Mammary epithelial cell (primary cell): ENCODE measurements at regions of chr11 and their contacts with region 1.

Region 1: DNA sequence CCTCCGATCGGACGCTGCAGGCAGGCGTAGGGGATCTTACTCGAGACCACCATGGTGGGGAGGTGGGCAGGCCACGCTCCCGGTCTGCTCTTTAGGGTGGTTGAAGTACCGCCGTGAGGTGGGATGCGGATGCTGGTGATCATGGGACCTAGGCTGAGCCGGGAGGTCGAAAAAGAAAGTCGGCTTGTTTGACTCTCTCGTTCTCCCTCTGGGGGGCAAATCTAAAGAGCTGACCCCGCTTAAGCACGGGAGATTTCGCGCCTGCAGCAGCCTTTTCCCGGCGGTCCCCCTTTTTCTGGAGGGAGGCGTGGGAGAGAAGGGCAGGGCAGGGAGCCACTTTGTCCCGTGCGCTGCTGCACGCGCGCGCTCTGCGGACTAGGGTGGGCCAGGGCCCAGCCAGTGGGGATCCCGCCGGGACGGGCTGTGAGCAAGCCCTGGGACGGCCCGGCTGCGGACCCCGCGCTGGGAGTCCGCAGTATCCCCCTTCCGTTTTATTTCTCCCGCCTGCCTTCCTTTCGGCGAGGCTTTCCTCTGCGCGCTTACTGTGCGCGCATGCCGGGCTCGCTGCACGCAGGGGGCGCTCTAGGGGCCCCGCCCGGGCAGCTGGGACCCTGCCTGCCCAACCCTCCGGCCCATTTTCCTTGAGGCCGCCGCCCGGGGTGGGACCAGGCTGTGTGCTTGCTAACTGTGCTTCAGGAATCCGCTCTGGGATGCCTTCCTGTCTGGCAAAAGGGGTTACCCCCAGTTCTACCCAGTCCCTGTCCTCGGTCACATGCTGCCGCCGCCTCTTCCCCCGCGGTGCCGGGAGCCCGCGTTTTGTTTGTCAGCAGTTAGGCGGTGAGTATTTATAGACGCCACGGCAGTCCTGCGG is 81.0 kb downstream of the PRR5L start:
- DNase-seq: peak; percentile 54
- H3K4me3 ChIP-seq: peak overlapping the region; percentile 56 to 84 (median 67)
- H3K27ac ChIP-seq: peak overlapping the region; percentile 12
- H3K4me1 ChIP-seq: peaks cover 9% of the 10 kb centered on the region
- H3K27me3 ChIP-seq: no peaks in the 10 kb centered on the region
- CTCF ChIP-seq: peak; percentile 18 to 68

Region 2: GRCh38 chr11:36306888-36307287 is 70.2 kb before region 1 on chr11:
- CTCF ChIA-PET with region 1: no interaction called
- dilution Hi-C with region 1: no loop called
- in situ Hi-C with region 1: no loop called
- intact Hi-C with region 1: loop called (anchors 5 kb)
- DNase-seq: no peak
- H3K4me3 ChIP-seq: no peak overlapping the region
- H3K27ac ChIP-seq: no peak overlapping the region
- H3K4me1 ChIP-seq: peaks cover 18% of the 10 kb centered on the region
- H3K27me3 ChIP-seq: no peaks in the 10 kb centered on the region
- CTCF ChIP-seq: peak; percentile 28 to 42

Region 3: DNA sequence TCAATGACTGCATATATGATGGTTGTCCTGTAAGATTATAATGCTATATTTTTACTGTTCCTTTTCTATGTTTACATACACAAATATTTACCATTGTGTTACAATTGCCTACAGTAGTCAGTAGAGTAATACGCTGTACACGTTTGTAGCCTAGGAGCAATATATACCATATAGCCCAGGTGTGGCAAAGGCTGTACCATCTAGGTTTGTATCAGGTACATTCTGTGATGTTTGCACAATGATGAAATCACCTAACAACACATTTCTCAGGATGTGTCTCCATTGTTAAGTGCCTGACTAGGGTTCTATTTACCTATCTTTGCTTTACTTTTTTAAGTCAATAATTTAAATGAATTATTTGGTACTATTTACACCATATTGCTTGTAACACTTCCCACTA is 59.1 kb before region 1 on chr11:
- CTCF ChIA-PET with region 1: no interaction called
- dilution Hi-C with region 1: no loop called
- in situ Hi-C with region 1: no loop called
- intact Hi-C with region 1: no loop called
- DNase-seq: no peak
- H3K4me3 ChIP-seq: no peak overlapping the region
- H3K27ac ChIP-seq: no peak overlapping the region
- H3K4me1 ChIP-seq: peaks cover 1% of the 10 kb centered on the region
- H3K27me3 ChIP-seq: peaks cover 2% of the 10 kb centered on the region
- CTCF ChIP-seq: no peak

Region 4: GRCh38 chr11:36333897-36334296 is 43.2 kb before region 1 on chr11:
- CTCF ChIA-PET with region 1: no interaction called
- dilution Hi-C with region 1: no loop called
- in situ Hi-C with region 1: no loop called
- intact Hi-C with region 1: loop called (anchors 5 kb)
- DNase-seq: peak; percentile 33
- H3K4me3 ChIP-seq: no peak overlapping the region
- H3K27ac ChIP-seq: no peak overlapping the region
- H3K4me1 ChIP-seq: peaks cover 8% of the 10 kb centered on the region
- H3K27me3 ChIP-seq: no peaks in the 10 kb centered on the region
- CTCF ChIP-seq: no peak

Region 5: GRCh38 chr11:36421546-36422155 is 44.5 kb after region 1 on chr11:
- CTCF ChIA-PET with region 1: no interaction called
- dilution Hi-C with region 1: loop called (anchors 5 kb)
- in situ Hi-C with region 1: no loop called
- intact Hi-C with region 1: no loop called
- DNase-seq: no peak
- H3K4me3 ChIP-seq: no peak overlapping the region
- H3K27ac ChIP-seq: no peak overlapping the region
- H3K4me1 ChIP-seq: peaks cover 17% of the 10 kb centered on the region
- H3K27me3 ChIP-seq: no peaks in the 10 kb centered on the region
- CTCF ChIP-seq: no peak

Region 6: DNA sequence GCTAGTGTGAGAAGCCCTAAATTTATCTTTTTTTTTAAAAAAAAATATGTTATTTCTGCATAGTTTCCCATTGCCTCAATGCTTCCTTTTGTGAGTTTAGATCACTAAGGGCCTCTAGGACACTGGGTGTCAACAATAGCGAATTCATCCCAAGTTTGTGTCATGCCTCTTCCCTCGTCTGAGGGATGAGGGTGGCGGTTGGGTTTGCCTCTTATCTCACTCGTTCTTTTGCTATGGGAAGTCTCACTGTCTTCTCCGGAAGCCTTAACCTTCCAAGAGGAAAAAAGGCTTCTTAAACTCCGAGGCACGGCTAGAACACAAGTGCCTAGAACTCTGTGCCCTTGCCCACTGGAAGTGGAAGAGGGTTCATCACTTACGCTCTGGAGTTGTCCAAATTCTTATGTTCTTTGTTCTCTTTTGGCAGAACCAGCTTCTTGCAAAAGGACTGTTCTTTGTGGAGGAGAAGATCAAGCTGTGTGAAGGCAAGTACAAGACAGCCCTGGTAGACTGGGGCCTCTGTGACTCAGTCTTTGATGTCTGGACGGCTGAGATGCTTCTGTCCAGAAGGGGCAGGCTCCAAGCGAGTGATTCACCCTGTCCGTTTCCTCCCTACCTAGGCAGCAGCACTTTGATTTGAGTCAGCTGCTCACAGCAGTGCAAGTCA is 54.4 kb after region 1 on chr11:
- CTCF ChIA-PET with region 1: no interaction called
- dilution Hi-C with region 1: no loop called
- in situ Hi-C with region 1: no loop called
- intact Hi-C with region 1: loop called (anchors 5 kb)
- DNase-seq: peak; percentile 93
- H3K4me3 ChIP-seq: no peak overlapping the region
- H3K27ac ChIP-seq: no peak overlapping the region
- H3K4me1 ChIP-seq: peaks cover 23% of the 10 kb centered on the region
- H3K27me3 ChIP-seq: no peaks in the 10 kb centered on the region
- CTCF ChIP-seq: peak; percentile 11 to 35

Region 7: GRCh38 chr11:36450110-36450572 is 73.0 kb after region 1 on chr11:
- CTCF ChIA-PET with region 1: no interaction called
- dilution Hi-C with region 1: no loop called
- in situ Hi-C with region 1: no loop called
- intact Hi-C with region 1: no loop called
- DNase-seq: no peak
- H3K4me3 ChIP-seq: no peak overlapping the region
- H3K27ac ChIP-seq: no peak overlapping the region
- H3K4me1 ChIP-seq: peaks cover 20% of the 10 kb centered on the region
- H3K27me3 ChIP-seq: no peaks in the 10 kb centered on the region
- CTCF ChIP-seq: no peak

Region 8: GRCh38 chr11:36469881-36470802 is 93.0 kb after region 1 on chr11:
- CTCF ChIA-PET with region 1: no interaction called
- dilution Hi-C with region 1: loop called (anchors 5 kb)
- in situ Hi-C with region 1: no loop called
- intact Hi-C with region 1: no loop called
- DNase-seq: peak; percentile 12
- H3K4me3 ChIP-seq: no peak overlapping the region
- H3K27ac ChIP-seq: no peak overlapping the region
- H3K4me1 ChIP-seq: peaks cover 9% of the 10 kb centered on the region
- H3K27me3 ChIP-seq: no peaks in the 10 kb centered on the region
- CTCF ChIP-seq: no peak

Region 9: DNA sequence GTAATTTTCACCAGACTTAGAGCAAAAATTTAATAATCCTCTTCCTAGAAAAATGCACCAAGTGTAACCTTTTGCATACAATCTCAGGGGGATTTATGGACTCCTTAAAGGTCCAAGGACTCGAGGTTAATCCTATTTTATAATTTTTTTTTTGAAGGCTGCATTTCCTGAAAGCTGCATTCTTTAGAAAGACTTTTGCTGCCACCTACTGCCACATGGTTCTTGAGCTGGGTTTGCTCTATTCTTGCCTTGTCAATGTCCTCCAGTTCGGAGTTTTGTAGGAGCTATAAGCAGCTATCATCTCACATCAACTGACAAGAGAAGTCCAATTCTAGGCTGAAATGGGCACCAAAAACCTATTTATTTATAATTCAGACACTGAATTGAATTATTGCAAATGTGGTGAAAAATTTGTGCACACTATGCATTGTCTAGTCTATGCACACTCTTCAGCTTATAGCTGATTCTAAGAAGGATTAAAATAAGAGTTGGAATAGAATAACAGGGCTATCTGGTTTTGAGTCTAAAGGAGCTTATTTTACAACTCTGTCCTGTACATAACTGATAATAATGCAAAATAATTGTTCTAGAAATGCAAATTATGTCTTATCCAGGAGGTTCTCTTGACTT is 101.7 kb after region 1 on chr11:
- CTCF ChIA-PET with region 1: no interaction called
- dilution Hi-C with region 1: loop called (anchors 5 kb)
- in situ Hi-C with region 1: no loop called
- intact Hi-C with region 1: loop called (anchors 2 kb)
- DNase-seq: peak; percentile 27
- H3K4me3 ChIP-seq: no peak overlapping the region
- H3K27ac ChIP-seq: no peak overlapping the region
- H3K4me1 ChIP-seq: peaks cover 4% of the 10 kb centered on the region
- H3K27me3 ChIP-seq: no peaks in the 10 kb centered on the region
- CTCF ChIP-seq: peak; percentile 57 to 65